Breast epithelium (tissue), 4 donors: ENCODE measurements at regions of chr10 and their contacts with region 1.

Region 1: GRCh38 chr10:107986571-107986970 is 822.1 kb upstream of the SORCS1 start:
- DNase-seq: no peak
- H3K4me3 ChIP-seq: no peak overlapping the region
- H3K27ac ChIP-seq: no peak overlapping the region
- H3K4me1 ChIP-seq: no peaks in the 10 kb centered on the region
- H3K27me3 ChIP-seq: no peaks in the 10 kb centered on the region
- CTCF ChIP-seq: no peak
- POLR2A ChIP-seq: no peak

Region 2: DNA sequence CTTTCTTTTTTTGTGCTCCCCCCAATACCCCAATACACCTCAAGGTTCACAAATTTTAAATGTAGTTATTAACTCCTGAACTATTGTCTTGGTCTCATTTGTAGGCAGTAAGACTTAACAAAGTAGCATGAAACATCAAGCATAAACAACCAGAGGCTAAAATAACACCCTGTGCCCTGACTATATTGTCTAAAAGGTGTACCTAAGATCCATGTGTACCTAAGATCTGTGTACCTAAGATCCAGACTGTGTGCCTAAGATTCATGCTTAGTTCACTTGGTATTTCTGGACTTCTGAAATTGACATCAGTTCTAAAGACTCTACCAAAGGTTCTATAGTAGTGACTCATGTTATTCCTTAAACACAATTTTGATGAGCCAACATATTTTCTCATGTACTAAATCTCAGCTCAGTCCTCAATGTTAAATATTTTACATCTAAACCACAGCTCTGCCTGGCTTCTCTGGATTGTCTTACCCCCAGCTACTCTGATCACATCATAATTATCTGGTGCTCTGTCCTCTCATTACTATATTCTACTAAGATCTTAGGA is 19.8 kb before region 1 on chr10:
- intact Hi-C with region 1: loop called (anchors 2 kb)
- DNase-seq: no peak
- H3K4me3 ChIP-seq: no peak overlapping the region
- H3K27ac ChIP-seq: no peak overlapping the region
- H3K4me1 ChIP-seq: no peaks in the 10 kb centered on the region
- H3K27me3 ChIP-seq: no peaks in the 10 kb centered on the region
- CTCF ChIP-seq: no peak
- POLR2A ChIP-seq: no peak

Region 3: GRCh38 chr10:108260383-108260906 is 273.9 kb after region 1 on chr10:
- intact Hi-C with region 1: no loop called
- DNase-seq: no peak
- H3K4me3 ChIP-seq: no peak overlapping the region
- H3K27ac ChIP-seq: no peak overlapping the region
- H3K4me1 ChIP-seq: no peaks in the 10 kb centered on the region
- H3K27me3 ChIP-seq: no peaks in the 10 kb centered on the region
- CTCF ChIP-seq: no peak
- POLR2A ChIP-seq: no peak